Naive thymus-derived CD4-positive, alpha-beta T cell (primary cell): ENCODE measurements at regions of chr1 and their contacts with region 1.

Region 1: GRCh38 chr1:11869650-11870207 is 11.0 kb upstream of the NPPB start:
- DNase-seq: no peak
- ATAC-seq: no peak
- H3K4me3 ChIP-seq: no peak overlapping the region
- H3K4me3 Mint-ChIP-seq: no peak overlapping the region
- H3K27ac ChIP-seq: no peak overlapping the region
- H3K27ac Mint-ChIP-seq: no peak overlapping the region
- H3K4me1 ChIP-seq: no peaks in the 10 kb centered on the region
- H3K4me1 Mint-ChIP-seq: peaks cover 0 to 1% (median 0%) of the 10 kb centered on the region in 7 donors
- H3K27me3 ChIP-seq: no peaks in the 10 kb centered on the region
- H3K27me3 Mint-ChIP-seq: peaks cover 5 to 27% (median 14%) of the 10 kb centered on the region in 5 donors

Region 2: DNA sequence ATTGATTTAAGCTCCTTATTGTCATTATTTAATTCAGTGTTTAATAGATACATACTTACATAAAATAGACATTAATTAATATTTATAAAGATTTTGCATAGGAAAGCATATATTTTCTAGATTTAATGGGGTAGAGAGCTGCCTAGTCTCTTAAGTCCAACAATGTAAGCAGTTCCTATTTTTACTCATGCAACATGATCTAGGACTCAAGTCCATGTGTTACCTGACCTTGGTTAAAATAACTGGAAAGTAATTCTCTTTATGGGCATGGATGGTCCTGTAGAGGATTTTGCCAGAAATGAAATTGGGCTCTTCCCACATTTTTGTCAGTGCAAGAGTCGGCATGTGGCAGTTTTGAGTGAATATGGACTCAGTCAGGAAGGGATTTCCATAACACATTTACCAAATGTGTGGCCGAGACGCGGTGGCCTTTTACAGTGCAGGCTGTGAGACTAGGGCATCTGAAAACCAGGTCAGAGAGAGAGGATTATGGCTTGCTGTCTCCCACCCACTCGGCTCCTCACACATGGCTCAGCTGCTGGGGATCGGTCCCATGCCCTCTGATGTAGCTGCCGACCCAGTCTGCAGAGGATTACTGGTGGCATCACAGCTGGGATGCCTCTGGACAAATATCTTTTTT is 1665.6 kb before region 1 on chr1:
- CTCF ChIA-PET with region 1: no interaction called
- POLR2A ChIA-PET with region 1: interaction called, 11 read pairs
- intact Hi-C with region 1: no loop called
- DNase-seq: no peak
- ATAC-seq: no peak
- H3K4me3 ChIP-seq: no peak overlapping the region
- H3K4me3 Mint-ChIP-seq: no peak overlapping the region
- H3K27ac ChIP-seq: no peak overlapping the region
- H3K27ac Mint-ChIP-seq: no peak overlapping the region
- H3K4me1 ChIP-seq: no peaks in the 10 kb centered on the region
- H3K4me1 Mint-ChIP-seq: peaks cover 0 to 5% (median under 1%) of the 10 kb centered on the region in 7 donors
- H3K27me3 ChIP-seq: peaks cover 0 to under 1% of the 10 kb centered on the region in 2 donors
- H3K27me3 Mint-ChIP-seq: peaks cover 0 to 11% (median 0%) of the 10 kb centered on the region in 5 donors

Region 3: GRCh38 chr1:12040457-12041051 is 170.8 kb after region 1 on chr1:
- CTCF ChIA-PET with region 1: no interaction called
- POLR2A ChIA-PET with region 1: no interaction called
- intact Hi-C with region 1: no loop called
- DNase-seq: no peak
- ATAC-seq: peak; percentile 42
- H3K4me3 ChIP-seq: no peak overlapping the region
- H3K4me3 Mint-ChIP-seq: no peak overlapping the region
- H3K27ac ChIP-seq: no peak overlapping the region
- H3K27ac Mint-ChIP-seq: no peak overlapping the region
- H3K4me1 ChIP-seq: no peaks in the 10 kb centered on the region
- H3K4me1 Mint-ChIP-seq: peaks cover 0 to 16% (median 0%) of the 10 kb centered on the region in 7 donors
- H3K27me3 ChIP-seq: no peaks in the 10 kb centered on the region
- H3K27me3 Mint-ChIP-seq: peaks cover 0 to 2% (median 0%) of the 10 kb centered on the region in 5 donors